B cell (primary cell): ENCODE measurements at regions of chr7 and their contacts with region 1.

Region 1: DNA sequence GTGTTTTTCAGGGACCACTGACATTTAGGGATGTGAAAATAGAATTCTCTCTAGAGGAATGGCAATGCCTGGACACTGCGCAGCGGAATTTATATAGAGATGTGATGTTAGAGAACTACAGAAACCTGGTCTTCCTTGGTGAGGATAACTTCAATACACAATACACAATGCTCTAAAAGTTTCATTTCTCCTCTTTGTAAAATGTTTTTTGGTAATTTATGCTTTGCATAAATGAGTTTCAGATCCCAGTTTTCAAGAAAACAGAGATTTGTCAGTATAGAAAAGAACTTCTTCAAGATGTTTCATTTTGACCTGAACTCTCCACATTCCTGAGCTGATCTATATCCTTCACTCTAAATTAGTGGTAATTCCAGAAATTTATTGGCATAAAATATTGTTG is 14.2 kb downstream of the ZNF92 start:
- DNase-seq: peak; percentile 62
- ATAC-seq: peak; percentile 68
- H3K4me3 ChIP-seq: peak overlapping the region in 3 of 5 experiments; percentile 7 to 45 (median 8)
- H3K4me3 Mint-ChIP-seq: peak overlapping the region; percentile 75
- H3K27ac ChIP-seq: peak overlapping the region; percentile 26 to 77
- H3K27ac Mint-ChIP-seq: peak overlapping the region; percentile 90
- H3K4me1 ChIP-seq: peaks cover 53 to 65% of the 10 kb centered on the region in 2 donors
- H3K4me1 Mint-ChIP-seq: peaks cover 73% of the 10 kb centered on the region
- H3K27me3 ChIP-seq: no peaks in the 10 kb centered on the region
- H3K27me3 Mint-ChIP-seq: no peaks in the 10 kb centered on the region
- CTCF ChIP-seq: no peak

Region 2: DNA sequence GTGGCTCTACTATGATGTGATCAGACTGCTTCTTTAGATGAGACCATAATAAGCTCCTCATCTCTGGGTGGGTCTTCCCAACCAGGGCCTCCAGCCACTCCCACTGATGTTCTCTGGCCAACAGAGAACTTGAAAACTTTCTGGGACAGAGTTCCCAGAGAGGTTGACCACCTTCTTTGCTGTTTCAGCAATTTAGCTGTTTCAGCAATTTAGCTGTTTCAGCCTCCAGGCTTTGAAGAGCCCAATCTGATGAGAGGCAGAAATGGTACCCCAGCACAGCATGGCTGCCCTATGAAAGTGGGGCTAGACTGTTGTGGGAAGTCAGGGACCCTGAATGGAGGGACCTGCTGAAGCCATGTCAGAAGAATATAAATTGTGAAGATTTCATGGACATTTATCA is 34.8 kb after region 1 on chr7:
- CTCF ChIA-PET with region 1: no interaction called
- POLR2A ChIA-PET with region 1: no interaction called
- intact Hi-C with region 1: no loop called
- DNase-seq: no peak
- ATAC-seq: no peak
- H3K4me3 ChIP-seq: no peak overlapping the region
- H3K4me3 Mint-ChIP-seq: no peak overlapping the region
- H3K27ac ChIP-seq: no peak overlapping the region
- H3K27ac Mint-ChIP-seq: no peak overlapping the region
- H3K4me1 ChIP-seq: no peaks in the 10 kb centered on the region
- H3K4me1 Mint-ChIP-seq: no peaks in the 10 kb centered on the region
- H3K27me3 ChIP-seq: peaks cover 0 to 3% (median 0%) of the 10 kb centered on the region in 4 experiments
- H3K27me3 Mint-ChIP-seq: peaks cover 7% of the 10 kb centered on the region
- CTCF ChIP-seq: no peak

Region 3: GRCh38 chr7:65509368-65510186 is 121.7 kb after region 1 on chr7:
- CTCF ChIA-PET with region 1: no interaction called
- POLR2A ChIA-PET with region 1: no interaction called
- intact Hi-C with region 1: loop called (anchors 10 kb)
- DNase-seq: peak; percentile 67
- ATAC-seq: no peak
- H3K4me3 ChIP-seq: peak overlapping the region in 4 of 5 experiments; percentile 54 to 69 (median 62)
- H3K4me3 Mint-ChIP-seq: peak overlapping the region; percentile 84
- H3K27ac ChIP-seq: no peak overlapping the region
- H3K27ac Mint-ChIP-seq: peak overlapping the region; percentile 67
- H3K4me1 ChIP-seq: peaks cover 3 to 12% of the 10 kb centered on the region in 2 donors
- H3K4me1 Mint-ChIP-seq: peaks cover 8% of the 10 kb centered on the region
- H3K27me3 ChIP-seq: peaks cover 0 to 25% (median 17%) of the 10 kb centered on the region in 4 experiments
- H3K27me3 Mint-ChIP-seq: peaks cover 19% of the 10 kb centered on the region
- CTCF ChIP-seq: no peak